ENCODE measurements at regions of chr14 and their contacts with region 1.

Region 1: GRCh38 chr14:105203057-105203531 is 22.0 kb upstream of the NUDT14 start:
- DNase-seq: peak in 1 of 2 donors; percentile 89
- H3K4me3 ChIP-seq: no peak overlapping the region
- H3K27ac ChIP-seq: no peak overlapping the region
- H3K4me1 ChIP-seq: peaks cover 4 to 26% of the 10 kb centered on the region in 2 donors
- H3K27me3 ChIP-seq: peaks cover 8% of the 10 kb centered on the region
- CTCF ChIP-seq: peak; percentile 81 to 92 (median 87)

Region 2: DNA sequence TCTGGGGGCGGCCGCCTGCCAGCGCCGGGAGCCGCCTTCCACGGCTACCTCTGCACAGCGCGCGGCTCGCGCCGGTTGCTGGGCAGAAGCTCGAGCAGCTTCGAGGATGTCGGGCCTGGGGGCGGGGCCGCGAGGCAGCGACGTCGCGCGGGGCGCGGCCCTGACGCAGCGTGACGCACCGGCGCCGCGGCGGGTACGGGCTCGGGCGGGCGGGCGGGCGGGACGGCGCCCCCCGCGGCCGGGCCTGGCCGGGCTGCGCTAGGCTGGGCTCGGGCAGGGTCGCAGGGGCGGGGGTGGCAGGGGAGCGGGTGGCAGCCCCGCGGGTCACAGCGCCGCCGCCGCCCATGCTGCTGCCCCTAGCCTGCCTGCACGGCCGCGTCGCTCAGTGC is 45.3 kb after region 1 on chr14 and contains the start of gene BTBD6:
- intact Hi-C with region 1: no loop called
- DNase-seq: peak; percentile 37 to 91
- H3K4me3 ChIP-seq: peak within 1 kb of the TSS; percentile 72
- H3K27ac ChIP-seq: peak within 1 kb of the TSS; percentile 84 to 88
- H3K4me1 ChIP-seq: peaks cover 4 to 17% of the 10 kb centered on the region in 2 donors
- H3K27me3 ChIP-seq: no peaks in the 10 kb centered on the region
- CTCF ChIP-seq: no peak
- total RNA-seq, gene BTBD6: 80.1 TPM

Region 3: DNA sequence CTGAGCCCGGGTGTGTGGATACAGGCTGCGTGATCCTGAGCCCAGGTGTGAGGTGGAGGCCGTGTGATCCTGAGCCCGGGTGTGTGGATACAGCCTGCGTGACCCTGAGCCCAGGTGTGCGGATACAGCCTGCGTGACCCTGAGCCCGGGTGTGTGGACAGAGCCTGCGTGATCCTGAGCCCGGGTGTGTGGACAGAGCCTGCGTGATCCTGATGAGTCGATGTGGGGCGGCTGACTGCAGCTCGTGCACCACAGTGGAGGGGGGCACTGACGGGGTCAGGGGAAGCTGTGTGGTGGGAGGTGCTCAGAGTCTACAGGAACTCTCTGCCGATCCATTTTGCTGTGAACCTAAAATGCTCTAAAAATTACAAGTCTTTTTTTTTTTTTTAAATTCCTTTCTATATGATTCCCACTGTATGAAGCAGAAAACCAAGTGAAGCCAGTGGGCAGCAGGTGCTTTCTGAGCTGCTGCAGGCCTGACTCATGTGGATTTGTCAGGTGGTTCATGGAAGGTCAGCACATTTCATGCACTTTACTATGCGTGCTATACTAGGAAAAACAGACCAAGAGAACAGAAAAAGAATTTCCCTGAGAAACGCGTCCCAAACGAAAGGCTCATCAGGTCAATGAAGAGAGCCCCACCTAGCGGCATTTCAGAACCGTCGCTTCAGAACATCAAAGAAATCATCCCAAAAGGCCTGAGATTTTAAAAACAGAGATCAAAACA is 78.4 kb after region 1 on chr14:
- intact Hi-C with region 1: loop called (anchors 2 kb)
- DNase-seq: no peak
- H3K4me3 ChIP-seq: no peak overlapping the region
- H3K27ac ChIP-seq: no peak overlapping the region
- H3K4me1 ChIP-seq: peaks cover 0 to 4% of the 10 kb centered on the region in 2 donors
- H3K27me3 ChIP-seq: no peaks in the 10 kb centered on the region
- CTCF ChIP-seq: peak; percentile 11 to 54 (median 27)

Region 4: DNA sequence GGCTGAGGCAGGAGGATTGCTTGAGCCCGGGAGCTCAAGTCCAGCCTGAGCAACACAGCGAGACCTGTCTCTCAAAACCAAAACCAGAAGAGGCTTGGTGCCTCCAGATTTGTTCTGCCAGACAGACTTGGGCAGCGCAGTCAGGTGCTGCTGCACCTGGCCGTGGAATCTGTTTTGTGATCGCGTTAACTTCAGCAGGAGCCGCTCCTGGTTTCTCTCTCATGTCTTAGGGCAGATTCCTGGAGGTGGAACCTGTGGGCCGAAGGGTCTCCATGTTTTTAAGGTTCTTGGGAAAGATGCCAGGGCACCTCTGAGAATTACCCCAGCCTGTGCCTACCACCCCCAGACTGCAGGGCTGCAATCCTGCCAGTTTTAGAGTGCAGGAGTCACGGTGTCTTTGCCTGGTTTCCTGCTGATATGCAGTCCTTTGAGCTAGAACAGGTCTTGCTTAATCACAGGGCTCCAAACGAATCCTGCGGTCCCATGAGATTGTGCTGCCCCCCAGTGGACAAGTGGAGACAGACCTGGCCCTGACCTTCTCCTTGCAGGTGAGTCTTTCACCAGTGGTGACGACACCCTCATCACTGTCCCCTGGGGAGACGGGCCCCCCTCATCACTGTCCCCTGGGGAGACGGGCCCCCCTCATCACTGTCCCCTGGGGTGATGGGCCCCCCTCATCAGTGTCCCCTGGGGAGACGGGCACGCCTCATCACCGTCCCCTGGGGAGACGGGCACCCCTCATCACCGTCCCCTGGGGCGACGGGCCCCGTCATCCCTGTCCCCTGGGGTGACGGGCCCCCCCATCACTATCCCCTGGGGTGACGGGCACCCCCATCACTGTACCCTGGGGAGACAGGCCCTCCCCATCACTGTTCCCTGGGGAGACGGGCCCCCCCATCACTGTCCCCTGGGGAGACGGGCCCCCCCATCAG is 149.1 kb after region 1 on chr14:
- intact Hi-C with region 1: loop called (anchors 1 kb)
- DNase-seq: peak; percentile 40 to 86
- H3K4me3 ChIP-seq: no peak overlapping the region
- H3K27ac ChIP-seq: no peak overlapping the region
- H3K4me1 ChIP-seq: peaks cover 0 to 3% of the 10 kb centered on the region in 2 donors
- H3K27me3 ChIP-seq: no peaks in the 10 kb centered on the region
- CTCF ChIP-seq: peak; percentile 76 to 84 (median 81)

Measured in ascending aorta (tissue), 2 donors.